GM12878 (cell line): ENCODE measurements at regions of chr1 and their contacts with region 1.

Region 1: GRCh38 chr1:159071970-159072582 is 4.5 kb downstream of the AIM2 start:
- DNase-seq: no peak
- ATAC-seq: peak; percentile 1; the same call in 2 of the 3 replicates
- H3K4me3 ChIP-seq: peak overlapping the region; percentile 13; the same call in 1 of the 2 replicates
- H3K27ac ChIP-seq: peak overlapping the region; percentile 20; the same call in 1 of the 2 replicates
- H3K4me1 ChIP-seq: peaks cover 35% of the 10 kb centered on the region
- H3K27me3 ChIP-seq: no peaks in the 10 kb centered on the region
- CTCF ChIP-seq: peak; percentile 61 to 78 (median 62)
- EP300 ChIP-seq: no peak
- POLR2A ChIP-seq: no peak
- RAD21 ChIP-seq: peak; percentile 74

Region 2: DNA sequence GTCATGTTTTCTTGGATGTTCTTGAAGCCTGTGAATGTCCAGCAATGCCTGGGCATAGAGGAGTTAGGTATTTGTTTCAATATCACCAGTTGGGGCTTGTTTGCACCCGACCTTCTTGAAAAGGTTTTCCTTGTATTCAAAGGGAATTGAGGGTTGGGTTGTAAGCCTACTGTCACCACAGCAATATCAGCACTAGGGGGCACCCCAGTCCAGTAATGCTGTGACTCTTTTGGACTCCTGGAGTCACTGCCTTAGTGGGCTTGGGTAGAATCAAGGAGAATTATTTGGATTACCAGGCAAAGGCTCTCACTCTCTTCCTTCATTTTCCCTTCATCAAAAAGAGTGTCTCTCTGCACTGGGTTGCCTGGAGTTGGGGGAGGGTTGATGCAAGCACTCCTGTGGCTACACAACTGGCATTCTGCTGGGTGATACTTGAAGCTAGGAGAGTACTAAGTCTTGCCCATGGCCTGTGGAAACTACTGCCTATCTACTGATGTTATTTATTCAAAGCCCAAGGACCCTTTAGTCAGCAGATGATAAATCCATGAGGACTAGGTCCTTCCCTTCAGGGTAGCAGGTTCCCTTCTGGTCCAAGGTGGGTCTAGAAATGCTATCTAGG is 565.6 kb before region 1 on chr1:
- CTCF ChIA-PET with region 1: interaction called, 36 read pairs
- POLR2A ChIA-PET with region 1: no interaction called
- RAD21 ChIA-PET with region 1: interaction called, 6 read pairs
- SMC1A ChIA-PET with region 1: interaction called, 23 read pairs
- in situ Hi-C with region 1: loop called (anchors 5 kb)
- intact Hi-C with region 1: loop called (anchors 5 kb)
- DNase-seq: peak; percentile 8
- ATAC-seq: peak; percentile 93
- H3K4me3 ChIP-seq: no peak overlapping the region
- H3K27ac ChIP-seq: no peak overlapping the region
- H3K4me1 ChIP-seq: no peaks in the 10 kb centered on the region
- H3K27me3 ChIP-seq: no peaks in the 10 kb centered on the region; a peak in 1 of 4 replicates
- CTCF ChIP-seq: peak; percentile 66 to 72 (median 67)
- EP300 ChIP-seq: no peak
- POLR2A ChIP-seq: no peak
- RAD21 ChIP-seq: peak; percentile 87

Region 3: DNA sequence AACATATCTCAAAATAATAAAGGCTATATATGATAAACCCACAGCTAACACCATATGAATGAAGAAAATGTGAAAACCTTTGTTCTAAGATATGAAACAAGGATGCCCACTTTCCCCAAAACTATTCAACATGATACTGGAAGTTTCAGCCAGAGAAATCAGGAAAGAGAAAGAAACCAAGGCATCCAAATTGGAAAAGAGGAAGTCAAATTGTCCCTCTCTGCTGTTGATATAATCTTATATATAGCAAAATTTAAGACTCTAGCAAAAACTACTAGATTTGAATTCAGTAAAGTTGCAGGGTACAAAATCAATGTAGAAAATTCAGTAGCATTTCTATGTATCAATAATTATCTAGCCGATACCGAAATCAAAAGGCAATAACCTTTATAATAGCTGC is 471.3 kb before region 1 on chr1:
- CTCF ChIA-PET with region 1: no interaction called
- POLR2A ChIA-PET with region 1: no interaction called
- RAD21 ChIA-PET with region 1: no interaction called
- SMC1A ChIA-PET with region 1: no interaction called
- in situ Hi-C with region 1: no loop called
- intact Hi-C with region 1: no loop called
- DNase-seq: no peak
- ATAC-seq: no peak
- H3K4me3 ChIP-seq: no peak overlapping the region
- H3K27ac ChIP-seq: no peak overlapping the region
- H3K4me1 ChIP-seq: no peaks in the 10 kb centered on the region
- H3K27me3 ChIP-seq: no peaks in the 10 kb centered on the region
- CTCF ChIP-seq: no peak
- EP300 ChIP-seq: no peak
- POLR2A ChIP-seq: no peak
- RAD21 ChIP-seq: no peak

Region 4: GRCh38 chr1:158931055-158931737 is 140.9 kb before region 1 on chr1 and contains the start of gene PYHIN1:
- CTCF ChIA-PET with region 1: no interaction called
- POLR2A ChIA-PET with region 1: no interaction called
- RAD21 ChIA-PET with region 1: no interaction called
- SMC1A ChIA-PET with region 1: interaction called, 3 read pairs
- in situ Hi-C with region 1: no loop called
- intact Hi-C with region 1: loop called (anchors 10 kb)
- DNase-seq: no peak
- ATAC-seq: peak; percentile 53; the same call in 2 of the 3 replicates
- H3K4me3 ChIP-seq: no peak within 1 kb of the TSS
- H3K27ac ChIP-seq: no peak within 1 kb of the TSS
- H3K4me1 ChIP-seq: no peaks in the 10 kb centered on the region
- H3K27me3 ChIP-seq: no peaks in the 10 kb centered on the region
- CTCF ChIP-seq: no peak
- EP300 ChIP-seq: no peak
- POLR2A ChIP-seq: no peak
- RAD21 ChIP-seq: no peak
- polyA plus RNA-seq, gene PYHIN1: 0.35 to 0.56 TPM

Region 5: GRCh38 chr1:159015440-159015909 is 56.6 kb before region 1 on chr1:
- CTCF ChIA-PET with region 1: interaction called, 37 read pairs
- POLR2A ChIA-PET with region 1: interaction called, 46 read pairs
- RAD21 ChIA-PET with region 1: interaction called, 25 read pairs
- SMC1A ChIA-PET with region 1: interaction called, 32 read pairs
- in situ Hi-C with region 1: no loop called
- intact Hi-C with region 1: no loop called
- DNase-seq: peak; percentile 84
- ATAC-seq: peak; percentile 83
- H3K4me3 ChIP-seq: peak overlapping the region; percentile 64
- H3K27ac ChIP-seq: peak overlapping the region; percentile 100
- H3K4me1 ChIP-seq: peaks cover 7% of the 10 kb centered on the region
- H3K27me3 ChIP-seq: no peaks in the 10 kb centered on the region
- CTCF ChIP-seq: no peak
- EP300 ChIP-seq: no peak
- POLR2A ChIP-seq: peak; percentile 81
- RAD21 ChIP-seq: no peak

Region 6: GRCh38 chr1:159089184-159089791 is 17.2 kb after region 1 on chr1:
- CTCF ChIA-PET with region 1: interaction called, 61 read pairs
- POLR2A ChIA-PET with region 1: interaction called, 4 read pairs
- RAD21 ChIA-PET with region 1: interaction called, 28 read pairs
- SMC1A ChIA-PET with region 1: interaction called, 43 read pairs
- in situ Hi-C with region 1: no loop called
- intact Hi-C with region 1: no loop called
- DNase-seq: no peak
- ATAC-seq: peak; percentile 83
- H3K4me3 ChIP-seq: no peak overlapping the region
- H3K27ac ChIP-seq: no peak overlapping the region
- H3K4me1 ChIP-seq: no peaks in the 10 kb centered on the region
- H3K27me3 ChIP-seq: 0 out of 4 replicates have a peak, but pooled peaks cover 0 to 2% of the 10 kb centered on the region in 2 experiments
- CTCF ChIP-seq: peak; percentile 58 to 73 (median 71)
- EP300 ChIP-seq: no peak
- POLR2A ChIP-seq: no peak
- RAD21 ChIP-seq: peak; percentile 62

Region 7: GRCh38 chr1:159161001-159161718 is 89.1 kb after region 1 on chr1:
- CTCF ChIA-PET with region 1: no interaction called
- POLR2A ChIA-PET with region 1: no interaction called
- RAD21 ChIA-PET with region 1: no interaction called
- SMC1A ChIA-PET with region 1: no interaction called
- in situ Hi-C with region 1: no loop called
- intact Hi-C with region 1: no loop called
- DNase-seq: peak; percentile 51
- ATAC-seq: peak; percentile 99
- H3K4me3 ChIP-seq: no peak overlapping the region
- H3K27ac ChIP-seq: no peak overlapping the region
- H3K4me1 ChIP-seq: peaks cover 3% of the 10 kb centered on the region; the same call in 1 of the 2 replicates
- H3K27me3 ChIP-seq: peaks cover 0 to 2% of the 10 kb centered on the region in 2 experiments; a peak in 1 of 4 replicates
- CTCF ChIP-seq: peak; percentile 94 to 100 (median 99); a peak in 5 of 6 replicates
- EP300 ChIP-seq: no peak
- POLR2A ChIP-seq: no peak
- RAD21 ChIP-seq: peak; percentile 100

Region 8: GRCh38 chr1:159936273-159936904 is 864.3 kb after region 1 on chr1:
- CTCF ChIA-PET with region 1: no interaction called
- POLR2A ChIA-PET with region 1: no interaction called
- RAD21 ChIA-PET with region 1: no interaction called
- SMC1A ChIA-PET with region 1: no interaction called
- in situ Hi-C with region 1: no loop called
- intact Hi-C with region 1: no loop called
- DNase-seq: no peak
- ATAC-seq: peak; percentile 86
- H3K4me3 ChIP-seq: no peak overlapping the region
- H3K27ac ChIP-seq: no peak overlapping the region
- H3K4me1 ChIP-seq: peaks cover 23% of the 10 kb centered on the region
- H3K27me3 ChIP-seq: 0 out of 4 replicates have a peak, but pooled peaks cover 0 to 2% of the 10 kb centered on the region in 2 experiments
- CTCF ChIP-seq: peak; percentile 98; a peak in 5 of 6 replicates
- EP300 ChIP-seq: no peak
- POLR2A ChIP-seq: no peak
- RAD21 ChIP-seq: peak; percentile 87